ENCODE measurements at regions of chr1 and their contacts with region 1.

Region 1: GRCh38 chr1:224675590-224675989 is 59.5 kb downstream of the CNIH3 start:
- DNase-seq: no peak
- ATAC-seq: no peak
- H3K4me3 ChIP-seq: no peak overlapping the region
- H3K4me1 ChIP-seq: no peaks in the 10 kb centered on the region
- CTCF ChIP-seq: no peak

Region 2: DNA sequence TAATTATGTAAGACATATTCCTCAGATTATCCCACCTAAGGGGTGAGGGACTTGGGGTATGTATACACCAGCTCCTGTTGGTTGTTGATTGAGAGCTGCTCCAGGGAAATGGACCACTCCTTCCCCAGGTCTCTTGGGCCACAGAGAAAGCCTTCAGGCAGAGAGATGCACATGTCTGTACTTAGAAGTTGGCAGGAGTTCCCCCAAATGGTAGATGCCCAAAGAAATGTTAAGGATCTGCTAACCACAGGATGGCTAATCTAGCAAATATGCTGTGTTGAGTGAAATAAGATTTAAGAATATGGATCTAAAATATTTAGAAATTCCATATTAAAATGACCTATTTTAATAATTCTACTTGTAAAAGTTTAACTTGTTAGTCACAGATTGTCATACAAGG is 153.1 kb after region 1 on chr1:
- intact Hi-C with region 1: loop called in 1 of 2 experiments (anchors 10 kb)
- DNase-seq: no peak
- ATAC-seq: no peak
- H3K4me3 ChIP-seq: no peak overlapping the region
- H3K4me1 ChIP-seq: no peaks in the 10 kb centered on the region
- CTCF ChIP-seq: no peak